ENCODE measurements at regions of chr11 and their contacts with region 1.

Region 1: GRCh38 chr11:29432719-29433325 is 584.0 kb downstream of the KCNA4 start:
- DNase-seq: no peak
- H3K4me3 Mint-ChIP-seq: no peak overlapping the region
- H3K27ac Mint-ChIP-seq: no peak overlapping the region
- H3K4me1 Mint-ChIP-seq: no peaks in the 10 kb centered on the region
- H3K27me3 Mint-ChIP-seq: no peaks in the 10 kb centered on the region

Region 2: GRCh38 chr11:29669310-29669709 is 236.5 kb after region 1 on chr11:
- CTCF ChIA-PET with region 1: no interaction called
- intact Hi-C with region 1: no loop called
- DNase-seq: no peak
- H3K4me3 Mint-ChIP-seq: no peak overlapping the region
- H3K27ac Mint-ChIP-seq: no peak overlapping the region
- H3K4me1 Mint-ChIP-seq: no peaks in the 10 kb centered on the region
- H3K27me3 Mint-ChIP-seq: no peaks in the 10 kb centered on the region

Region 3: DNA sequence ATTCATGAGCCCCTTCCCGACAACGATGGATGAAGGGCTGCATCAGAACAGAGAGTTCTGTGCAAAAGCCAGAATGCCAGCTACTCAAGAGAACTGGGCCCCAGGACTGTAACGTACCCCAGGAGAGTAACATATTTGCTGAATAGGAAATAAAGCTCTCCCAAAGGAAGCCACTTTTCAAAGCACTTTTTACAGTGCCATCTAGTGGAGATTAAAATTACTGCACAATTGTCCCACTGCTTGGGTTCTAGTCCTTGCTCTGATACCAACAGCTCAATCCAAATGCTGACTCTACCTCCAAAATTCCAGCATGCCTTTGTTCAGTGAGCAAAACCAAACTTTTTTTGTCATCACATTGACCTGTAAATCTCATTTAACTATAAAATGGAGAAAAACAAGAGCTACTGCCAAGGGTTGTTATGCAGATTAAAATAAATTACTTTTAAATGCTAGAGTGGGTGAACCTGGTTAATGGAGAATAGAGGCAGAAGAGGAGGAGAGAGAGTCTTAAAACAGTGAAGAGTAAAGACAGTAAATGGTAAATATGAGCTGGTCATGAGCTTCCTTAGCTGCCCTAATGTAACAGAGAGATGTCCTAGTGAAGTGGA is 710.4 kb after region 1 on chr11:
- CTCF ChIA-PET with region 1: interaction called, 3 read pairs
- intact Hi-C with region 1: loop called (anchors 2 kb)
- DNase-seq: no peak
- H3K4me3 Mint-ChIP-seq: no peak overlapping the region
- H3K27ac Mint-ChIP-seq: no peak overlapping the region
- H3K4me1 Mint-ChIP-seq: no peaks in the 10 kb centered on the region
- H3K27me3 Mint-ChIP-seq: peaks cover 9% of the 10 kb centered on the region

Region 4: DNA sequence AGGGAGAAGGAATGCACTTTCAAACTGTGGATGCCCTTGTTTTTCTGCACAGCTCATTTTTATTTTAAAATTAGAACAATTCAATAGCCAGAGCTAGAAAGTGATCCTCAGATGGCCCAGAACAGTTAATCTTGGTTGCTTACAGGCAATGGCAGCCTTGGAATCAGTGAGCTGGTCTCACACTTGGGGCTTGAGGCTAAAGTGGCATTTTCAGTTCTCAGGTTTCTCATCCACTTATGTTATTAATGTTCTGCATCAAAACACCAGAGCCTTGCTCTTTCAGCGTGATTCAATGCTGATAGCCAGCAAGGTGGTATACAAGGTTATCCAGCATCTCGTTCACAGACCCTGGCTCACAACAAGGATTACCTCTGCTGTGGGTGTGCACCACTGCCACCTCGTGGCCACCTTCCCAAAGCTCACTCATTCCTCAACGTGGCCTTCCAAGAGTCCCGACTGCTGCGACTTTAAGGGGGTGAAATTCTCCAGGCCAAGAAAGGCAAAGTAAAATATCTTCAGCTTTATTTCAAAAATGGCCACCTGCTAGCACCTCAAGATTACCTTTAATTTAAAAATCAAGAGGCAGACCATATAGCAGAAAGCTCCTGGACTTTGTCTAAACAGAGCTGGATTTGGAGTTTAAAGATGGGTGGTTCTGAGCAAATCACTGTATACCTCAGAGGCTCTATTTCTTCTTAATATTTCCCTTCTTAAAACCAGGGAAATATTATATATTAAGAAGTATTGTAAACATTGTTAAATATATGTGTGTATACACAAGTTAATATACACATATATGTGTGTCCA is 763.8 kb after region 1 on chr11:
- CTCF ChIA-PET with region 1: interaction called, 3 read pairs
- intact Hi-C with region 1: loop called (anchors 1 kb)
- DNase-seq: peak; percentile 57
- H3K4me3 Mint-ChIP-seq: no peak overlapping the region
- H3K27ac Mint-ChIP-seq: no peak overlapping the region
- H3K4me1 Mint-ChIP-seq: no peaks in the 10 kb centered on the region
- H3K27me3 Mint-ChIP-seq: peaks cover 4% of the 10 kb centered on the region

Region 5: DNA sequence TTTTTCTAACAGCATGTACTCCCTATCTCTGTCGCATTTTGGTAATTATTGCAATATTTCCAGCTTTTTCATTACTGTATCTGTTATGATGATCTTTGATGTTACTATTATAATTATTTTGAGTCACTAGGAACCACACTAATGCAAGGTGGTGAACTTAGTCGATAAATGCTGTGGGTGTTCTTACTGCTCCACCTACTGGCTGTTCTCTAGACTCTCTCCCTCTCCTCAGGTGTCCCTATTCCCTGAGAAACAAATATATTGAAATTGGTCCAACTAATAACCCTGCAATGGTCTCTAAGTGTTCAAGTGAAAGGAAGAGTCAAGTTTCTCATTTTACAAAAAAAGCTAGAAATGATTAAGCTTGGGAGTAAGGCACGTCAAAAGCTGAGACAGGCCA is 900.6 kb after region 1 on chr11:
- CTCF ChIA-PET with region 1: no interaction called
- intact Hi-C with region 1: loop called (anchors 5 kb)
- DNase-seq: no peak
- H3K4me3 Mint-ChIP-seq: no peak overlapping the region
- H3K27ac Mint-ChIP-seq: no peak overlapping the region
- H3K4me1 Mint-ChIP-seq: peaks cover 17% of the 10 kb centered on the region
- H3K27me3 Mint-ChIP-seq: no peaks in the 10 kb centered on the region

Region 6: GRCh38 chr11:30917859-30918478 is 1485.1 kb after region 1 on chr11:
- CTCF ChIA-PET with region 1: no interaction called
- intact Hi-C with region 1: loop called (anchors 5 kb)
- DNase-seq: no peak
- H3K4me3 Mint-ChIP-seq: no peak overlapping the region
- H3K27ac Mint-ChIP-seq: no peak overlapping the region
- H3K4me1 Mint-ChIP-seq: no peaks in the 10 kb centered on the region
- H3K27me3 Mint-ChIP-seq: peaks cover 7% of the 10 kb centered on the region